ENCODE measurements at regions of chr21 and their contacts with region 1.

Region 1: DNA sequence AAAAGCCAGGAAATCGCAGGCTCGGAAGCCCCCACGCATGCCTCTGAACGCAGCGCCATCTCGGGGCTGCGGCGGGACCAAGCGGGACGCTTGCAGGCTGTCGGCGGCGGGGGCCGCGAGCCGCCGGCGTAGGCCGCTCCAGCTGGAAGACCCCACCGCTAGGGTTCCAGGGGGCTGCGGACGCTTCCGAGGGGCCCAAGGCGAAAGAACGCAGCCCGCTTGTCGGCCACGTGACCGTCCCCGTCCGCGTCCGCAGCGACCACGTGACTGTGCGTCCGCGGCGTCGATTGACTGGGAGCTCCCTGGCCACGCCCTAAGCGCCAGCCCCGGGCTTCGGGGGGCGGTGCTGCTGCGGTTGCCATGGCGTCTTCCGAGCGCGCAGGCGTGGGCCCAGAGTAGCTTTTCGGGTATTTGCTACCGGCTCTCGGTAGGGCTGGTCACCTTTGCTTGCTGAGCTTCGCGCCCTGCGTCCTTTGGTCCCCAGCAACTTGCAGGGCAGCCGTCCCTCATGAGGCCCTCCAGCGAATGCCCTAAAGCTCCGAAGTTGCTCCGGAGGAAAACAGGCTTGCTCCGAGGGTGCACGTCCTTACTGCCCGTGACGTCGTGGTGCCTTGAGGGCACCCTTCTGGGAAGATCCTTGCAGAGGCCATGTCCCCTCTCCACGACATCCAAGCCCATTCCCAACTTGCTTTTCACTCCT is 197.2 kb downstream of the DYRK1A start:
- DNase-seq: peak; percentile 86
- ATAC-seq: peak; percentile 88
- H3K4me3 Mint-ChIP-seq: peak overlapping the region; percentile 93
- H3K27ac Mint-ChIP-seq: peak overlapping the region; percentile 96
- H3K4me1 Mint-ChIP-seq: peaks cover 21% of the 10 kb centered on the region
- H3K27me3 Mint-ChIP-seq: no peaks in the 10 kb centered on the region
- CTCF ChIP-seq: no peak

Region 2: GRCh38 chr21:36966066-36966820 is 597.5 kb before region 1 on chr21 and contains the start of gene HLCS:
- CTCF ChIA-PET with region 1: no interaction called
- POLR2A ChIA-PET with region 1: no interaction called
- intact Hi-C with region 1: loop called (anchors 5 kb)
- DNase-seq: peak; percentile 77
- ATAC-seq: peak; percentile 92
- H3K4me3 Mint-ChIP-seq: peak within 1 kb of the TSS; percentile 85
- H3K27ac Mint-ChIP-seq: peak within 1 kb of the TSS; percentile 80
- H3K4me1 Mint-ChIP-seq: peaks cover 20% of the 10 kb centered on the region
- H3K27me3 Mint-ChIP-seq: no peaks in the 10 kb centered on the region
- CTCF ChIP-seq: no peak
- total RNA-seq, gene HLCS: 8.1 and 10.6 TPM in 2 replicates

Region 3: DNA sequence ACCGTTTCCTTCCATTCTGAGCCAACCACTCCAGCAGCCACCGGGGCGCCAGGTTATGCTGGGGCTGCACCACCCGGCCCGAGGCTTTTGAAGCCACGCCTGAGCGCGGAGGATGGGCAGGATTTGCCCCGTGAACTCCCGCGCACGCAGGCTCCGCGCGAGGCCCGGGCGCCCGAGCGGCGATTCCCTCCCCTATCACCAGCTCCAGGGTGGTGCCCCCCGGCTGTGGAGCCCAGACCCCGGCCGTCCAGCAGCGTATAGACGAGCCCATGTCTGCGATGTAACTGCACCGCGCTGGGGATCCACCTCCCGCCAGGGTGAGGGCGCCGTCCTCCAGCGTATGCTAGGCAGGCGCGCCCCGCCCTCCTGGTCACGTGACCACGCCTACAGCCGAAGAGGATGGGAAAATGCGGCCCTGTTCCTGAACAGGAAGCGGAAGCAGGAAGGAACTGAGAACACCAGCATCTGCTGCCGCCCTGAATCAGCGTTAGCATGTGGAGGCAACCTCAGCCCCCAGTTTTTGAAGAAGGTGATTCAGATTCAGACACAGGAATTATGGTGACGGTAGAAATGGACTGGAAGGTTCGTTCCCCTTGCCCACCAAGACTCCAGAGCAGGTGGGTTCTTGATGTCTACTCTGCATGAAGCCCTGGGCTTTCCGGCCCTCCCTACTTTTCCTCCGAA is 342.7 kb before region 1 on chr21:
- CTCF ChIA-PET with region 1: no interaction called
- POLR2A ChIA-PET with region 1: interaction called, 3 read pairs
- intact Hi-C with region 1: loop called (anchors 1 kb)
- DNase-seq: peak; percentile 90
- ATAC-seq: peak; percentile 87
- H3K4me3 Mint-ChIP-seq: peak overlapping the region; percentile 91
- H3K27ac Mint-ChIP-seq: peak overlapping the region; percentile 88
- H3K4me1 Mint-ChIP-seq: peaks cover 31% of the 10 kb centered on the region
- H3K27me3 Mint-ChIP-seq: no peaks in the 10 kb centered on the region
- CTCF ChIP-seq: no peak

Region 4: DNA sequence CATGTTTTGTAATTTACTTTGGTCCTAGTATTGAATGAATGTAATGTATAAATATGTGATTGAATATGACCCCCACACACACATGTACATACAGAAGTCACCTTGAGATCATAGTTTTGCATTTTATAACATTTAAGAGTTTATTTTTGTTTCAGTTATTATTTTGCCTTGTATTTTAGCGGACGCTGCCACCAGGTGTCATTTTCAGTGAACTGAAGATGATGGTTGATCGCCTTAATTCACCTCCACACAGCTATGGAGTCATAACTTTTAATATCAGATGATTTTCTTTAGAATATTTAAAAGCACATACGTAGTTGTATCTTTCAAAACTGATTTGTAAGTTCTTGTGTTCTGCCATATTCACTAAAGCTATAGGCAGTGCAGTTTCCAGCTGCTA is 66.8 kb before region 1 on chr21:
- CTCF ChIA-PET with region 1: interaction called, 4 read pairs
- POLR2A ChIA-PET with region 1: interaction called, 3 read pairs
- intact Hi-C with region 1: loop called (anchors 5 kb)
- DNase-seq: no peak
- ATAC-seq: no peak
- H3K4me3 Mint-ChIP-seq: no peak overlapping the region
- H3K27ac Mint-ChIP-seq: no peak overlapping the region
- H3K4me1 Mint-ChIP-seq: peaks cover 2% of the 10 kb centered on the region
- H3K27me3 Mint-ChIP-seq: no peaks in the 10 kb centered on the region
- CTCF ChIP-seq: no peak

Region 5: GRCh38 chr21:37532868-37533780 is 30.7 kb before region 1 on chr21:
- CTCF ChIA-PET with region 1: no interaction called
- POLR2A ChIA-PET with region 1: interaction called, 9 read pairs
- intact Hi-C with region 1: loop called (anchors 2 kb)
- DNase-seq: peak; percentile 25
- ATAC-seq: peak; percentile 87
- H3K4me3 Mint-ChIP-seq: no peak overlapping the region
- H3K27ac Mint-ChIP-seq: no peak overlapping the region
- H3K4me1 Mint-ChIP-seq: peaks cover 9% of the 10 kb centered on the region
- H3K27me3 Mint-ChIP-seq: peaks cover 33% of the 10 kb centered on the region
- CTCF ChIP-seq: no peak

Region 6: DNA sequence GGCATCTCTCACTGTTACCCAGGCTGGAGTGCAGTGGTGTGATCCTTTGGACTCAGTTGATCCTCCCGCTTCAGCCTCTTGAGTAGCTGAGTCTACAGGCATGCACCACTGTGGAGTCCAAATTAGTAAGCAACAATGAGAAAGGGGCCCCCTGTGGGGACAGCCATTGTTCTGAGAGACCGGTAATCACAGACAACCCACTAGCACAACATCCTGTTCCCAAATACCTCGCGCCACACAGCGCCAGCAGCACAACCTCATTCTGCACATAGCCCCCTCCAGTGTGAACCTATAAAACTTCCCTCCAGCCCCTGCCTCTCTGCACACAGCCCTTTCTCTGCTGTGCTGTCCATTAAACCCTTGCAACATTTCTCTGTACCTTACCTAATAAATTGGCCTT is 29.2 kb after region 1 on chr21:
- CTCF ChIA-PET with region 1: no interaction called
- POLR2A ChIA-PET with region 1: no interaction called
- intact Hi-C with region 1: no loop called
- DNase-seq: no peak
- ATAC-seq: no peak
- H3K4me3 Mint-ChIP-seq: no peak overlapping the region
- H3K27ac Mint-ChIP-seq: no peak overlapping the region
- H3K4me1 Mint-ChIP-seq: no peaks in the 10 kb centered on the region
- H3K27me3 Mint-ChIP-seq: no peaks in the 10 kb centered on the region
- CTCF ChIP-seq: no peak

Region 7: GRCh38 chr21:39313571-39314142 is 1749.9 kb after region 1 on chr21 and contains the start of gene BRWD1:
- CTCF ChIA-PET with region 1: no interaction called
- POLR2A ChIA-PET with region 1: no interaction called
- intact Hi-C with region 1: loop called (anchors 2 kb)
- DNase-seq: peak; percentile 86
- ATAC-seq: peak; percentile 49
- H3K4me3 Mint-ChIP-seq: peak within 1 kb of the TSS; percentile 94
- H3K27ac Mint-ChIP-seq: peak within 1 kb of the TSS; percentile 92
- H3K4me1 Mint-ChIP-seq: peaks cover 47% of the 10 kb centered on the region
- H3K27me3 Mint-ChIP-seq: no peaks in the 10 kb centered on the region
- CTCF ChIP-seq: no peak
- total RNA-seq, gene BRWD1: 36.9 and 40.3 TPM in 2 replicates